Activated B cell treated with CpG ODN at 0.5 μM for 24 hours (primary cell): ENCODE measurements at regions of chr18 and their contacts with region 1.

Region 1: DNA sequence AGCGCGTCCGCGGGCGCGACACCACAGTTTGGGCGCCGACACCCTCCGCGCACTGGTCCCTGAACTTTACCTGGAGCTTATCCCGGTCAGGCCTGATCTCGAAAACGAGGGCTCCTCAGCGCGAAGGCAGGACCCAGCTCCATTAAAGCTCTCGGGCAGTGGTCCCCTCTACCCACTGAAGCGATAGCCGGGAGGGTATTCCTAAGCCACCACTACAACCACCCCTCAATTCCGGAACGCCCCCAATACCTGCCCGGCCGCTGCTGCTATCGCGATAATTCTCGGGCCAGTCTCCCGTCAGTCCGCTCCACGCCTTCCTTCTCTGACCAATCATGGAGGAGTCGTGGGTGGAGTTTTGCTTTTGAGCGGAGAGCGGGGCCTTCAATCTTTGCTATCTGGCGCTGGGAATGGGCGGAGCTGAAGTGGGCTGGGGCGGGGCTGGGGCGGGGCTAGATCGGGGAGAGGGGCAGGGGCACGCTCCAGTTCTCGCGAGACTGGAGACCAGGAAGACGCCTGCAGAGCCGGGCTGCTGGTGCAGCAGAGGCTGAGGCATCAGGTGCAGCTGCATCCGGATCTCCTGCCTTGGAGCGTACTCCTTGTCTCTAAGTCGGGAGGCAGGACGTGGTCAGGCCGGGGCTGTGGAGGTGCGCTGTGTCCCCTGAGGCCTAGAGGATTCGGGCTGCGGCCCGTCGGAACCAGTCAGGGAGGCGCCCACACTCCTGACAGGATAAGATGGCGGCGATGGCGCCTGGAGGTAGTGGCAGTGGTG is at the starts of genes PIGN and RELCH:
- DNase-seq: peak; percentile 73
- ATAC-seq: peak; percentile 94
- H3K4me3 Mint-ChIP-seq: peak within 1 kb of the TSS; percentile 98
- H3K27ac Mint-ChIP-seq: peak within 1 kb of the TSS; percentile 95
- H3K4me1 Mint-ChIP-seq: peaks cover 58% of the 10 kb centered on the region
- H3K27me3 Mint-ChIP-seq: no peaks in the 10 kb centered on the region
- CTCF ChIP-seq: no peak
- total RNA-seq, gene PIGN: 26.4 and 29.4 TPM in 2 replicates
- total RNA-seq, gene RELCH: 45.4 and 59.0 TPM in 2 replicates

Region 2: GRCh38 chr18:60966876-60967275 is 1220.1 kb before region 1 on chr18:
- CTCF ChIA-PET with region 1: no interaction called
- POLR2A ChIA-PET with region 1: no interaction called
- intact Hi-C with region 1: no loop called
- DNase-seq: no peak
- ATAC-seq: no peak
- H3K4me3 Mint-ChIP-seq: no peak overlapping the region
- H3K27ac Mint-ChIP-seq: no peak overlapping the region
- H3K4me1 Mint-ChIP-seq: no peaks in the 10 kb centered on the region
- H3K27me3 Mint-ChIP-seq: no peaks in the 10 kb centered on the region
- CTCF ChIP-seq: no peak

Region 3: GRCh38 chr18:62249478-62250097 is 62.6 kb after region 1 on chr18:
- CTCF ChIA-PET with region 1: interaction called, 93 read pairs
- POLR2A ChIA-PET with region 1: interaction called, 10 read pairs
- intact Hi-C with region 1: loop called (anchors 1 kb)
- DNase-seq: no peak
- ATAC-seq: peak; percentile 67
- H3K4me3 Mint-ChIP-seq: no peak overlapping the region
- H3K27ac Mint-ChIP-seq: no peak overlapping the region
- H3K4me1 Mint-ChIP-seq: no peaks in the 10 kb centered on the region
- H3K27me3 Mint-ChIP-seq: no peaks in the 10 kb centered on the region
- CTCF ChIP-seq: peak; percentile 75

Region 4: DNA sequence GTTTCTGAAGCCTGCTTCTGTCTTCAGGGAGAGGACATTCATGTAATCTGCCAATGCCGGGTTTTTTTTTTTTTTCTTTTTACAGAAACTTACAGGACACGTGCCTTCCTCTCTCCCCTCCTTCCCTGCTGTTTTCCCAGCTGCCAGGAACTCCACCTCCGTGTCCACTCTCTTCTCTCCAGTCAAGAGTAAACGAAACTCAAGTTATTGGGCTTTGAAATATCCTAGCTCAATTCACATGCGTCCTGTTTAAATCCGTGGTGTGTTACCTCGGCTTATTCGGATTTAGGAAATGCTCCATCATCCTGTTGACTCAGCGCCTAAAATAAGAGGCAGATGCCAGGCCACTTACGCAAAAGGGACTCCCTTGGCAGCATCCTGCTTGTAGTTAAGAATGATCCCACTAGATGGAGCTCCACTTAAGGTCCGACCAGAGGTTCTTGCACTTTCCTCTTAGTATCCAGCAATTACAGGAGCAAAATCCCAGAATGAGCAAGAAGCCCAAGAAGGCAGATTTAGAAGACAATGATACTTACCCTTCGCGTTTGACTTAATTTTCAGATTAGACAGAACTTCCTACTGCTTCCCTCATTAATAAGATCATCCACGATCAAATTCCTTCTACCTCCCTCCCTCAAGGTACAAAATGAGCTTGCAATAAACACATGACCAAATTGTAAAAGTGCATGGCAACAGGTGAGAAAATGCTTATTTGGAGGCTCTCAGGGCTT is 238.7 kb after region 1 on chr18:
- CTCF ChIA-PET with region 1: no interaction called
- POLR2A ChIA-PET with region 1: no interaction called
- intact Hi-C with region 1: loop called (anchors 2 kb)
- DNase-seq: no peak
- ATAC-seq: no peak
- H3K4me3 Mint-ChIP-seq: no peak overlapping the region
- H3K27ac Mint-ChIP-seq: no peak overlapping the region
- H3K4me1 Mint-ChIP-seq: peaks cover 10% of the 10 kb centered on the region
- H3K27me3 Mint-ChIP-seq: peaks cover 3% of the 10 kb centered on the region
- CTCF ChIP-seq: peak; percentile 50

Region 5: GRCh38 chr18:62584241-62585120 is 397.5 kb after region 1 on chr18:
- CTCF ChIA-PET with region 1: no interaction called
- POLR2A ChIA-PET with region 1: no interaction called
- intact Hi-C with region 1: loop called (anchors 1 kb)
- DNase-seq: peak; percentile 67
- ATAC-seq: peak; percentile 96
- H3K4me3 Mint-ChIP-seq: no peak overlapping the region
- H3K27ac Mint-ChIP-seq: no peak overlapping the region
- H3K4me1 Mint-ChIP-seq: peaks cover 26% of the 10 kb centered on the region
- H3K27me3 Mint-ChIP-seq: no peaks in the 10 kb centered on the region
- CTCF ChIP-seq: no peak

Region 6: DNA sequence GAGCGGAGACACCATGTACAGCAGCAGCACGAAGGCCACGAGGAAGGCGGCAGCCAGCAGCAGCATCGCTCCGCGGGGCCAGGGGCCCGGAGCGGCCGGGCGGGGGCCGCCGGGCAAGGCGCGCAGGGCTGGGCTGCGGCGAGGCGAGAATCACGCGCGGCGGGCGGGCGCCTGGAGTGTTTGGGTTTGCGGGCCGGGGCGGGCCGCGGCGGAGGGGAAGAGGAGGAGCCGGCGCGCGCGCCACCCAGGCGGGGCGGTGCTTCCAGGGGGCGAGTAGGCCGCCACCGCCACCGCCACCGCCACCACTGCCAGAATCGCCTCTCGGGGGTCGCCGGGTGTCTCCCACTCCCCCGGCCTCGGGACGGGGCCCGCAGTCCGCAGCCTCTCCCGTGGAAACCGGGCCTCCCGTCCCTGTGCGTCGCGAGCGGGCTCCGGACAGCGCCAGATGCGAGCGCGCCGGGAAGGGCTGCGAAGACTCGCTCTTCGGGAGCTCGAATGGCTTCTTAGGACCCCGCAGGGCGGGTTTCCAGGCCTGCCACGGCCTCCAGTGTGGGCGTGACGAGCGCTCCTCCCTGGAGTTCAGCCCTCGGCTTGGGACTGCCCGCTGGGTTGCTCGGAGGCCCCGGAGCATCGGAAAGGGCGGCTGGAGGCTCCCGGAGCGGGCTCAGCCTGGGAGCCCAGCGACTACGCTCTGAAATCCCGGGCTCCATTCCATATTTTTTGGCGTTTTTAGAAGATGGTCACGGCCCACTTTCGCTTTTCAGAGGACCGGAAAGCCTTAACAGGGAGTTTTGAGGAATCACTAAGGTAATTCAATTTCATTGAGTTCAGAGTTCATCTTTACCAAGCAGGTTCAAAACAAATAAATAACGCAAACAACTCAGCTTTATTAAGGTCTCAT is 1180.3 kb after region 1 on chr18 and contains the start of gene KDSR:
- CTCF ChIA-PET with region 1: no interaction called
- POLR2A ChIA-PET with region 1: no interaction called
- intact Hi-C with region 1: loop called (anchors 1 kb)
- DNase-seq: peak; percentile 88
- ATAC-seq: peak; percentile 92
- H3K4me3 Mint-ChIP-seq: peak within 1 kb of the TSS; percentile 88
- H3K27ac Mint-ChIP-seq: peak within 1 kb of the TSS; percentile 71
- H3K4me1 Mint-ChIP-seq: peaks cover 23% of the 10 kb centered on the region
- H3K27me3 Mint-ChIP-seq: no peaks in the 10 kb centered on the region
- CTCF ChIP-seq: no peak
- total RNA-seq, gene KDSR: 15.0 and 15.3 TPM in 2 replicates

Region 7: GRCh38 chr18:63439334-63439733 is 1252.4 kb after region 1 on chr18:
- CTCF ChIA-PET with region 1: no interaction called
- POLR2A ChIA-PET with region 1: no interaction called
- intact Hi-C with region 1: loop called (anchors 1 kb)
- DNase-seq: peak; percentile 16
- ATAC-seq: peak; percentile 79
- H3K4me3 Mint-ChIP-seq: no peak overlapping the region
- H3K27ac Mint-ChIP-seq: no peak overlapping the region
- H3K4me1 Mint-ChIP-seq: peaks cover 7% of the 10 kb centered on the region
- H3K27me3 Mint-ChIP-seq: peaks cover 7% of the 10 kb centered on the region
- CTCF ChIP-seq: peak; percentile 94